Endothelial cell of umbilical vein (primary cell): ENCODE measurements at regions of chr13 and their contacts with region 1.

Region 1: GRCh38 chr13:45219938-45220375 is 19.1 kb upstream of the KCTD4 start:
- DNase-seq: peak; percentile 86
- H3K4me3 ChIP-seq: no peak overlapping the region
- H3K27ac ChIP-seq: peak overlapping the region; percentile 28
- H3K4me1 ChIP-seq: peaks cover 18% of the 10 kb centered on the region
- H3K27me3 ChIP-seq: no peaks in the 10 kb centered on the region
- CTCF ChIP-seq: no peak
- POLR2A ChIP-seq: no peak

Region 2: DNA sequence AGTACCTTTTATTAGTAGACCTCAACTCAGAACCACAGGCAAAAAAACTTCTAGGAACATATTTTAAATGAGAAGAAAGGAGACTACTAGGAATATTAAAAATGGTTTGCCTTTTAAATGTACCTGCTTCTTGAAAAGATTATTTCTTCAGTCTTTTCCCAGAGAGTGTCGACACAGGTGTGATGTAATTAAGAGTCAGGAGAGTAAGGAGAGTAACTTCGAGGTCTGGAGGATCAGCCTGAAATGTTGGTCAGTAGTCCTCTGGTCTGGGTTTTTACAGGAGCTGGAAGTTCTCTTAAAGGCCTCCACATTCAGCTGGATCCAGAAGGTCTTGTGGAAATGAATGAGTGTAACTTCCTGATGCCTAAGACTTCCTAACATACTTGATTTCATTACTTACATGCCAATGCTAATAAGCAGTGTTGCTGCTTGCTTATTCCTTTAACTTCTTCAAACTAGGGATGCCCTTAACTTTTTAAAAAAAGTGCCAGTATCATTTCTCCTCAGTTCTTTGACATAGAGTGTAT is 19.2 kb before region 1 on chr13 and contains the start of gene KCTD4:
- CTCF ChIA-PET with region 1: interaction called, 11 read pairs
- POLR2A ChIA-PET with region 1: no interaction called
- dilution Hi-C with region 1: no loop called
- intact Hi-C with region 1: no loop called
- DNase-seq: peak; percentile 56
- H3K4me3 ChIP-seq: no peak within 1 kb of the TSS
- H3K27ac ChIP-seq: no peak within 1 kb of the TSS
- H3K4me1 ChIP-seq: peaks cover 10% of the 10 kb centered on the region
- H3K27me3 ChIP-seq: no peaks in the 10 kb centered on the region
- CTCF ChIP-seq: no peak
- POLR2A ChIP-seq: no peak
- total RNA-seq, gene KCTD4: not detected in 2 replicates

Region 3: GRCh38 chr13:45257638-45258338 is 37.8 kb after region 1 on chr13:
- CTCF ChIA-PET with region 1: no interaction called
- POLR2A ChIA-PET with region 1: no interaction called
- dilution Hi-C with region 1: no loop called
- intact Hi-C with region 1: no loop called
- DNase-seq: no peak
- H3K4me3 ChIP-seq: no peak overlapping the region
- H3K27ac ChIP-seq: no peak overlapping the region
- H3K4me1 ChIP-seq: no peaks in the 10 kb centered on the region
- H3K27me3 ChIP-seq: no peaks in the 10 kb centered on the region
- CTCF ChIP-seq: no peak
- POLR2A ChIP-seq: no peak

Region 4: GRCh38 chr13:45269204-45269603 is 49.2 kb after region 1 on chr13:
- CTCF ChIA-PET with region 1: no interaction called
- POLR2A ChIA-PET with region 1: no interaction called
- dilution Hi-C with region 1: no loop called
- intact Hi-C with region 1: no loop called
- DNase-seq: no peak
- H3K4me3 ChIP-seq: no peak overlapping the region
- H3K27ac ChIP-seq: no peak overlapping the region
- H3K4me1 ChIP-seq: no peaks in the 10 kb centered on the region
- H3K27me3 ChIP-seq: no peaks in the 10 kb centered on the region
- CTCF ChIP-seq: no peak
- POLR2A ChIP-seq: no peak

Region 5: GRCh38 chr13:45630806-45631205 is 410.8 kb after region 1 on chr13:
- CTCF ChIA-PET with region 1: no interaction called
- POLR2A ChIA-PET with region 1: no interaction called
- dilution Hi-C with region 1: no loop called
- intact Hi-C with region 1: no loop called
- DNase-seq: no peak
- H3K4me3 ChIP-seq: no peak overlapping the region
- H3K27ac ChIP-seq: no peak overlapping the region
- H3K4me1 ChIP-seq: no peaks in the 10 kb centered on the region
- H3K27me3 ChIP-seq: peaks cover 2 to 4% of the 10 kb centered on the region in 2 experiments
- CTCF ChIP-seq: no peak
- POLR2A ChIP-seq: no peak